ENCODE measurements at regions of chr5 and their contacts with region 1.

Region 1: DNA sequence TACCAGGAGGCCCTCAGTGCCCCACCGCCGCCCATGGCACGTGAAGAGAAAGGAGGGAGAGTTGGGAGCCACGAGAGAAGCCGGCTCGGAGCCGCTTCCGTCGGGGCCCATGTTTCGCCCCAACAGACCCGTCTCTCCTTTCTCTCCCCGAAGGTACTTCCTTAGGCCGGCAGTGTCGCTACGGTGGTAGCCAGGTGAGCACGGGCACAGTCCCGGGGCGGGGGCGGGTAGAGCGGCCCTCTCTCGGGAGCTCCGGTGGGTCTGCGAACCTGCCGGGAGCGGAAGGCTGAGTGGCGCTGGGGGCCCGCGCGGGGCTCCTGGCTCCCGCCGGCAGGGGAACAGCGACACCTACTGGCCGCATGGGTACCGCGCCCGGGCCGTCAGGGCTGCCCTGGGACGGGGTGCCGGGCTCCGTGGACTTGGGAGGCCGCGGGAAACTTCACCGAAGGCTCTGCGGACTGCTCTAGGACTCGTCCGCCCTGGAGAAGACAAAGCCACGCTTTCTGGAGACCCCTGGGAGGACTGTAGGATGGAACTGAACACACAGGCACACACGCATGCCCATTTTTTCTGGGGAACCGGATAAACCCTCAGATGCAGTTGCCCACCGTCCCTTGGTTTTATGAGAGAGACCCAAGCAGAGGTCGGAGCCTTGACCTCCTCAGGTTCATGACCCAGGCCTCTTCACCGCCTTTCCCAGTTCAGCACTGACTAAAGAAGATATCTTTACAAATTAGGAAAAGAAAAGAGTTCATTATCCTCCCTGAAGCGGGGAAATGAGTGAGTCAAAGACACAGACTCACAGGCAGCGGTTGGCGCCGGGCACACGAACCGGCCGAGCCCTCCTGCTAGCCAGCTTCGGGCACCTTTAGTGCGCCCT is 202.5 kb downstream of the MEF2C start:
- DNase-seq: peak; percentile 71
- H3K4me3 Mint-ChIP-seq: peak overlapping the region; percentile 26
- H3K27ac Mint-ChIP-seq: no peak overlapping the region
- H3K4me1 Mint-ChIP-seq: peaks cover 31% of the 10 kb centered on the region
- H3K27me3 Mint-ChIP-seq: peaks cover 81% of the 10 kb centered on the region

Region 2: GRCh38 chr5:87526131-87526530 is 1154.4 kb before region 1 on chr5:
- intact Hi-C with region 1: no loop called
- DNase-seq: no peak
- H3K4me3 Mint-ChIP-seq: no peak overlapping the region
- H3K27ac Mint-ChIP-seq: no peak overlapping the region
- H3K4me1 Mint-ChIP-seq: no peaks in the 10 kb centered on the region
- H3K27me3 Mint-ChIP-seq: peaks cover 2% of the 10 kb centered on the region

Region 3: DNA sequence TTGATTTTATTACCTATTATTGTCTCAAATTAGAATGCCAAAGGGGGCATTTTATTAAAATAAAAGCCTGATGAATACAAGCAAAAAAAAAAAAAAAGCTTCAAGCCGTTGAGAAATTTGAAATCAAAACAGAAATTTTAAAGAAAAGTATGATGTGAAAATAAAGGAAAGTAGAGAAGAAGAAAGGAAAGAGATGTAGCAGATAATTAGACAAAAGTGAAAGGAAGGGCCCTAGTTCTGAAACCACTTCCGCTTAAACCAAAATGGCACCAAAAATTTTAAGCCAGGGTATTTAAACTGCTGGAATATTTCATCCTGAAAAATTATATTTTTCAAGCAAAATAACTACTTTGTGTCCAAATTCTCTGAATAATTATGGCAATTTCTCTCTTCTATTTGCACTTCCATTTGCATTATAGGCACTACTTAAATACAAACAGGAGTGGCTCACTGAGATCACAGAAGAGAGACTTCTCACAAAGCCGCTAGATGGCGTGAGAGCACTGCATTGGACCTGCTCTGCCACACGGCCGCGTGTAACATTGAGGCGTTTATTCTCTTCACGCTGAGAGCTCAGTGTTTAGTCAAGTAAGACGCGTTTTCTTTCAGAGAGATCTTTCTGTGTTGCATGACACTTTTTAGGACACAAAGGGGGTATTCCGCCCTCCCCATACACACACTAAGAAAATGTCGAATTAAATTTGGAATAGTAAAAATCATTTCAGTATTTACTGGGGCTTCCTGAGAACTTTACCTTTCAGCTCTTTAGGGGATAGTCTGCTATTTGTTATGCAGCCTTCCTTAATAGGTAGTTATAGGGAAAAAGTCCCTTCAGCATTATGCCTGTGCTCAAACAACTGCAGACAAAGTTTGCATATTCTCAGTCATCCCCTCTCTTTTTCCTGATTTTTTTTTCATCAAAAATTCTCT is 899.4 kb before region 1 on chr5:
- intact Hi-C with region 1: loop called (anchors 1 kb)
- DNase-seq: peak; percentile 64
- H3K4me3 Mint-ChIP-seq: no peak overlapping the region
- H3K27ac Mint-ChIP-seq: no peak overlapping the region
- H3K4me1 Mint-ChIP-seq: no peaks in the 10 kb centered on the region
- H3K27me3 Mint-ChIP-seq: peaks cover 10% of the 10 kb centered on the region

Region 4: GRCh38 chr5:88495810-88496209 is 184.7 kb before region 1 on chr5:
- intact Hi-C with region 1: no loop called
- DNase-seq: no peak
- H3K4me3 Mint-ChIP-seq: no peak overlapping the region
- H3K27ac Mint-ChIP-seq: no peak overlapping the region
- H3K4me1 Mint-ChIP-seq: no peaks in the 10 kb centered on the region
- H3K27me3 Mint-ChIP-seq: peaks cover 12% of the 10 kb centered on the region

Region 5: GRCh38 chr5:88660947-88661805 is 19.3 kb before region 1 on chr5:
- intact Hi-C with region 1: loop called (anchors 1 kb)
- DNase-seq: no peak
- H3K4me3 Mint-ChIP-seq: peak overlapping the region; percentile 65
- H3K27ac Mint-ChIP-seq: peak overlapping the region; percentile 61
- H3K4me1 Mint-ChIP-seq: peaks cover 23% of the 10 kb centered on the region
- H3K27me3 Mint-ChIP-seq: peaks cover 71% of the 10 kb centered on the region

Region 6: GRCh38 chr5:88666761-88667495 is 13.6 kb before region 1 on chr5:
- intact Hi-C with region 1: loop called (anchors 1 kb)
- DNase-seq: no peak
- H3K4me3 Mint-ChIP-seq: peak overlapping the region; percentile 81
- H3K27ac Mint-ChIP-seq: peak overlapping the region; percentile 29
- H3K4me1 Mint-ChIP-seq: peaks cover 31% of the 10 kb centered on the region
- H3K27me3 Mint-ChIP-seq: peaks cover 88% of the 10 kb centered on the region

Region 7: DNA sequence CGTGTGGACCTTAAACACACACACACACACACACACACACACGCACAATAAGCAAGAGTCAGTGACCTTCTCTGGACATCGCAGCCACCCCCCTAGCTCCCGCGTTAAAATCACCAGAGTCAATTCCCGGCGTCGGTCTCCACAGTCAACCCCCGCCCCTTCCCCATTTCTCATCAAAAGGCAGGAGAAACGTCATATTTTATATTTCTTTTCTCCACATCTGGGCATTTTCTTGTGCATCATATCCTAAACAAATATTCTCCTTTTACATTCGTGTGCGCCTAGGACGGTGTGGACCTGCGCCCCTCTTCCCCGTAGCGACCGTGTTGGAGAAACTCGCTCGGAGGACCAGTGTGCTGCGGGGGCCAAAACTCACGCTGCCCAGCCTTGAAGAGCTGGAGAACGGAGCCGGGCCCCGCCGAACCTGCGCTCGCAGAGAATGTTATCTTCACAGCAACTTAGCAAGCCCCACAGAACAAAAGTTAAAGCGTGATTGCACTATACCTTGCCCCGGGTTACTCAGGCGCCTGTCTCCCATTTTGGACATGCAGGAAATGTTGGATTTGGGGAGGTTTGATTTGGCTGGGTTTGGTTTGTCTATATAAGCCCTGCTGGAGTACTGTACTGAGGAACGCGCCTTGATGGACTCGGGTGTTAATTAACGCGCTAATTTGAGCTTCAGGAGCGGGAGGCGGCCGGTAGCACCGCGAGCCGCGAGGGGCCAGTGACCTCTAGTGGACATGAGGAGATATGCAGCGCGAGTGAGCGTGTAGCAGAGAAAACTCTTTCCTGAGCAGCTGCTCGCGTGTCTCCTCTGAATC is 10.1 kb after region 1 on chr5:
- intact Hi-C with region 1: loop called (anchors 1 kb)
- DNase-seq: peak; percentile 60
- H3K4me3 Mint-ChIP-seq: peak overlapping the region; percentile 62
- H3K27ac Mint-ChIP-seq: peak overlapping the region; percentile 92
- H3K4me1 Mint-ChIP-seq: peaks cover 21% of the 10 kb centered on the region
- H3K27me3 Mint-ChIP-seq: peaks cover 87% of the 10 kb centered on the region

Region 8: GRCh38 chr5:88718736-88719135 is 38.2 kb after region 1 on chr5:
- intact Hi-C with region 1: no loop called
- DNase-seq: no peak
- H3K4me3 Mint-ChIP-seq: no peak overlapping the region
- H3K27ac Mint-ChIP-seq: no peak overlapping the region
- H3K4me1 Mint-ChIP-seq: no peaks in the 10 kb centered on the region
- H3K27me3 Mint-ChIP-seq: peaks cover 7% of the 10 kb centered on the region